ENCODE measurements at regions of chr6 and their contacts with region 1.

Region 1: GRCh38 chr6:56637640-56638039 is 5.0 kb downstream of the DST start:
- DNase-seq: no peak
- H3K4me3 ChIP-seq: no peak overlapping the region
- H3K27me3 ChIP-seq: no peaks in the 10 kb centered on the region
- CTCF ChIP-seq: peak; percentile 54

Region 2: DNA sequence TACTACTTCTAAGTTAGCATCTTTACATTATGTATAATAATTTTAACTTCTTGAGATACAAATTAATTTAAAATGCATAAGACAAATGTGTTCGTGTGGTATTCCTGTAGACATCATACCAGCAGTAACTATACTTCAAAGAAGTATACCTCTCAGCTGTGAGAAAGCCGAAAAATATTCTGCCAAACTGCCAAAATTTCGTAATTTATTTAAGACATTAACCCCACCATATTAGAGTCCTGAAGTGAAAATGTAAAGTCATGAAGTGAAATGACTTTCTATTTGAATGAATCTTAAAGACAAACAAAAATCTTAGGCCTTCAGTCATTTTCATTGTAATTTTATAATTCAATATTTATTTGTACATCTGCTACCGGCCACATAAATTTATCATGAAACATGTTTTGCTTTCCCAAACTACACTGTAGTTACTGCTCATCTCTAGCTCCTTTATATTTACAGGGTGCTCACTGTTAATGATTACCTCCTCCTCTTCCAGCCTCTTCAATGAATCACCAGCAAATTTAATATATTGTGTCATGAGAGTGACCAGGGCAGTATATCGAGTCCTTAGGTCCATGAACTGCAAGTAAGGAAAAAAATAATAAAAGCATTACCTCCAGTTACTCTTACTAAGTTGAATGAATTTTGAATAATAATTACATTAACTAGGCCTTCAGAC is 13.5 kb before region 1 on chr6:
- CTCF ChIA-PET with region 1: interaction called, 15 read pairs
- POLR2A ChIA-PET with region 1: no interaction called
- DNase-seq: no peak
- H3K4me3 ChIP-seq: no peak overlapping the region
- H3K27me3 ChIP-seq: no peaks in the 10 kb centered on the region
- CTCF ChIP-seq: no peak

Region 3: GRCh38 chr6:56699066-56699654 is 61.5 kb after region 1 on chr6:
- CTCF ChIA-PET with region 1: interaction called, 17 read pairs
- POLR2A ChIA-PET with region 1: no interaction called
- DNase-seq: no peak
- H3K4me3 ChIP-seq: no peak overlapping the region
- H3K27me3 ChIP-seq: no peaks in the 10 kb centered on the region
- CTCF ChIP-seq: peak; percentile 39; the same call in 1 of the 2 replicates

Region 4: DNA sequence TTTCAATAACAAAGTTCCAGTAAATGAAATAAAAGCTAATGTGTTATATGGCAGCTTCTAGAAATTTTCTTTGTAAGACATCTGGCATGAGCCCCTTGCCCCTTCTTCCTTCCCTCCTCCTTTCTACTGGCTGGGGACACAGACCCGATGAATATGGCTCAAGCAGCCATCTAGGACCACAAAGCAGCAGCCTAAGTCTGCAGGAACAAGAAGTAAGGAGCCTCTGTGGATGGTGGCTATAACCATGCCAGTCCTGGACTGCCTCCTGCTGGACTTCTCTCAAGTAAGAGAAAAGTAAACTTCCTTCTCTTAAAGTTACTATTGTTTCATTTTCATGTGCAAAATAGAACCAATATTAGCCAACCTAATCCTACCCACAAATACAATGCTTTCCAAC is 119.9 kb after region 1 on chr6:
- CTCF ChIA-PET with region 1: interaction called, 13 read pairs
- POLR2A ChIA-PET with region 1: interaction called, 3 read pairs
- DNase-seq: no peak
- H3K4me3 ChIP-seq: no peak overlapping the region
- H3K27me3 ChIP-seq: no peaks in the 10 kb centered on the region
- CTCF ChIP-seq: peak; percentile 43; the same call in 1 of the 2 replicates

Region 5: GRCh38 chr6:56786256-56786655 is 148.6 kb after region 1 on chr6:
- CTCF ChIA-PET with region 1: no interaction called
- POLR2A ChIA-PET with region 1: no interaction called
- DNase-seq: no peak
- H3K4me3 ChIP-seq: no peak overlapping the region
- H3K27me3 ChIP-seq: no peaks in the 10 kb centered on the region
- CTCF ChIP-seq: no peak